RWPE1 (cell line): ENCODE measurements at regions of chr7 and their contacts with region 1.

Region 1: GRCh38 chr7:100852048-100852872 is at the start of gene SLC12A9:
- DNase-seq: peak; percentile 97
- H3K27ac ChIP-seq: peak within 1 kb of the TSS; percentile 73
- CTCF ChIP-seq: peak; percentile 97

Region 2: GRCh38 chr7:100673300-100673941 is 178.8 kb before region 1 on chr7 and contains the start of gene GNB2:
- CTCF ChIA-PET with region 1: no interaction called
- POLR2A ChIA-PET with region 1: no interaction called
- DNase-seq: peak; percentile 98
- H3K27ac ChIP-seq: peak within 1 kb of the TSS; percentile 92
- CTCF ChIP-seq: no peak

Region 3: DNA sequence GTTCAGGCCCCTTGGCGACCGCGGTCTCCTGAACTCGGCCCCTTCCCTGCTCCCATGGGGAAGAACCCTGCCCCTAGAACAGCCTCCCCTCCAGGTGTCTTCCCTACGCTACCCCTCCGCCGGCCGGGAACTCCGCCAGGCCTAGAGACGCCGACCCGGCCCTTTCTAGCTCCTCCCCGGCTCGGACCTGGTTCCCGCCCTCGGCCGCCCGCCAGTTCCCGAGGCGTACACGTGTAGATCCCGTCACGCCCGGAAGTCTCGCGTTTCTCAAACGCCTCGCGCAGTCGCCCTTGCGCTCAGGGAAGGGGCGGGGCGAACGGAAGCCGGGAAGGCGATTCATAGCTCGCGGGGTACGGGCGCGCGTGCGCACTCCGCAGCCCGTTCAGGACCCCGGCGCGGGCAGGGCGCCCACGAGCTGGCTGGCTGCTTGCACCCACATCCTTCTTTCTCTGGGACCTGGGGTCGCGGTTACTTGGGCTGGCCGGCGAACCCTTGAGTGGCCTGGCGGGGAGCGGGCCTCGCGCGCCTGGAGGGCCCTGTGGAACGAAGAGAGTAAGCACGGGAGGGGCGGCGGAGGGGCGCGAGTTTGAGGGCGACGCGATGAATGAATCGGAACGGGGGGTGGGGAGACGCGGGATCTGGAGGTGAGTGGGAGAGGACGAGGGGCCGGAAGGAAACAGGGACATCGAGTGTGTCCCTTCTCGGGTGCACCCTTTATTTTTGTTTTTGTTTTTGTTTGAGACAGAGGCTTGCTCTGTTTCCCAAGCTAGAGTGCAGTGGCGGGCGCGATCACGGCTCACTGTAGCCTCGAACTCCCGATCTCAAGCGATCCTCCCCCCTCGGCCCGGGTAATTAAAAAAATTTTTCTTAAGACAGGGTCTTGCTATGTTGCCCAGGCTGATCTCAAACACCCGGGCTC is 146.2 kb before region 1 on chr7 and contains the start of gene POP7:
- CTCF ChIA-PET with region 1: interaction called, 32 read pairs
- POLR2A ChIA-PET with region 1: interaction called, 7 read pairs
- DNase-seq: peak; percentile 96
- H3K27ac ChIP-seq: peak within 1 kb of the TSS; percentile 85
- CTCF ChIP-seq: no peak

Region 4: GRCh38 chr7:100719523-100720319 is 132.5 kb before region 1 on chr7:
- CTCF ChIA-PET with region 1: interaction called, 40 read pairs
- POLR2A ChIA-PET with region 1: no interaction called
- DNase-seq: no peak
- H3K27ac ChIP-seq: no peak overlapping the region
- CTCF ChIP-seq: peak; percentile 71

Region 5: GRCh38 chr7:100803398-100804233 is 48.6 kb before region 1 on chr7:
- CTCF ChIA-PET with region 1: interaction called, 16 read pairs
- POLR2A ChIA-PET with region 1: interaction called, 3 read pairs
- DNase-seq: peak; percentile 96
- H3K27ac ChIP-seq: peak overlapping the region; percentile 99
- CTCF ChIP-seq: no peak